CD4-positive, alpha-beta T cell (primary cell): ENCODE measurements at regions of chr14 and their contacts with region 1.

Region 1: DNA sequence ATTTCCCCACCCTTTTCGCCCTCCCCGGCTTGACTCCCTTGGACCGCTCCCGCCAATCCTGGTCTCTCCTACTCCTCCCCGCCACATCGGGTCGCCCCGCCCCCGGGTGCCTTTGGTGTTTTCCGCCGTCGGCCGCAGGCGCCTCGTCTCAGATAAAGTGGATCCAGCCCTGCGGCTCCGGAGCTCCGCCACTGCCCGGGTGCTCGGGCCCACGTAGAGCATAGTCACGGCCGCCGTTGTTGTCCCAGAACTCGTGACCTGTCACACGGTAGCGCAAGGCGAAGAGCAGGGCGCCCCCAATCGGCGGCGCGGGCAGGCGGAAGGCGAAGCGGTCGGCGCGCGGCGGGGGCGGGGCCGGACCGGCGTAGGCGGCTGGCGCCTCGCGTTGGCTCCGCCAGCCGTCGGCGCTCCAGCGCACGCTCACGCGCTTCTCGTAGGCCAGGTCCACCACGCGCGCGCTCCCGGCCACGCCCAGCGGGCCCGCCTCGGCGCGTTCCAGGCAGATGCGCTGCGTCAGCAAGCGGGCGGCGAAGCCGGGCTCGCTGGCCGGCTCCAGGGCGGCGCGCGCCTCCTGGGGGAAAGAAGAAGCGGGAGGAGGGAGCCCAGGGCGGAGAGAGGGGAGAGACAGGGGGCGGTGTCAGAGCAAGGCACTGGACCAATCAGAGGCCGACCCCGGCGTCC is 1.2 kb downstream of the PPP1R3E start:
- DNase-seq: peak; percentile 91 to 100 (median 96)
- ATAC-seq: peak; percentile 69
- H3K4me3 ChIP-seq: peak overlapping the region; percentile 75
- H3K4me3 Mint-ChIP-seq: peak overlapping the region; percentile 96
- H3K27ac ChIP-seq: peak overlapping the region; percentile 97
- H3K27ac Mint-ChIP-seq: peak overlapping the region; percentile 97
- H3K4me1 ChIP-seq: peaks cover 30% of the 10 kb centered on the region
- H3K4me1 Mint-ChIP-seq: peaks cover 39% of the 10 kb centered on the region
- H3K27me3 ChIP-seq: peaks cover 7 to 8% of the 10 kb centered on the region in 2 experiments
- H3K27me3 Mint-ChIP-seq: peaks cover 15% of the 10 kb centered on the region
- CTCF ChIP-seq: peak; percentile 65

Region 2: GRCh38 chr14:22864979-22865378 is 436.4 kb before region 1 on chr14:
- CTCF ChIA-PET with region 1: no interaction called
- POLR2A ChIA-PET with region 1: no interaction called
- intact Hi-C with region 1: no loop called
- DNase-seq: no peak
- ATAC-seq: no peak
- H3K4me3 ChIP-seq: no peak overlapping the region
- H3K4me3 Mint-ChIP-seq: no peak overlapping the region
- H3K27ac ChIP-seq: no peak overlapping the region
- H3K27ac Mint-ChIP-seq: no peak overlapping the region
- H3K4me1 ChIP-seq: peaks cover 26% of the 10 kb centered on the region
- H3K4me1 Mint-ChIP-seq: peaks cover 15% of the 10 kb centered on the region
- H3K27me3 ChIP-seq: no peaks in the 10 kb centered on the region
- H3K27me3 Mint-ChIP-seq: no peaks in the 10 kb centered on the region
- CTCF ChIP-seq: no peak

Region 3: DNA sequence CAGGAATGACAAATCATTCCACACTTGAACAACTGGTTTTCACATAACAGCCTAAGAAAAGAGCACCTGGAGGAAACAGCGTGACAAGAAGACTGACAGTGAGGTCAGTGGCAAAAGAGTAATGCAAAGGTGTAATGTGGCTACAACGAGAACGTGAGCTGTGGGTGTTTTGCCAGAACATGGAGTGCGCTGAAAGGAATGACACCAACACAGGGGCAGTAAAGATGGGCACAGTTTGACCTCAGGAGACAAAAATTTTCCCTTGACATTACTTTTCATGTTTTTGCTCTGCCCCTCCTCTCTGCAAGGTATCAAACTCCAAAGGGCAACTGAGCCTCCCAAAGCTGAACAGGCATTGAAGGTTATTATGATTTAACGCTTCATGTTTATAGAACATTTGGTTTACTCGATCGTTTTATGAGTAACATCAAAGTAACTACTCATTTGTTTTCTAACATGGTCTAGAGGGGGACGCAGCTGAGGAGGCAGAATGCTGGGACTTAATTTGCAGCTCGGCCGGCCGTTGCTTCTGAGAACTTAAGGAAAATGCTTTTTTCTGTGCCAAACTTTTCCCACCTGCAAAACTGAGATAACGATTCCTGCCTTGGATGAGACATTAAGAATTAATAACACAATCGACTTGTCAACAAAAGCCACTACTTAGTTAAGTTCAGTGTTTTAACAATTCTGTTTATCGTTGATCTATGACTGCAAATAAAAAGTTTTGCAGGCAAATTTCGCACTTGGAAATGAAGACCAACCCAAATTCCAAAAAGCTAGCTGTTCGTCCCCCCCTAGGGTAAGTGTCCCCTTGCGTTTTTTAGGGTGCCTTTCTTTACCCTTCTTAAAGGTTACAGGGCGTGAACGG is 345.5 kb before region 1 on chr14:
- CTCF ChIA-PET with region 1: no interaction called
- POLR2A ChIA-PET with region 1: no interaction called
- intact Hi-C with region 1: loop called in 1 of 2 experiments (anchors 5 kb)
- DNase-seq: no peak
- ATAC-seq: no peak
- H3K4me3 ChIP-seq: peak overlapping the region; percentile 89
- H3K4me3 Mint-ChIP-seq: peak overlapping the region; percentile 92
- H3K27ac ChIP-seq: peak overlapping the region; percentile 63 to 83
- H3K27ac Mint-ChIP-seq: peak overlapping the region; percentile 83
- H3K4me1 ChIP-seq: peaks cover 21% of the 10 kb centered on the region
- H3K4me1 Mint-ChIP-seq: peaks cover 18% of the 10 kb centered on the region
- H3K27me3 ChIP-seq: no peaks in the 10 kb centered on the region
- H3K27me3 Mint-ChIP-seq: no peaks in the 10 kb centered on the region
- CTCF ChIP-seq: no peak

Region 4: DNA sequence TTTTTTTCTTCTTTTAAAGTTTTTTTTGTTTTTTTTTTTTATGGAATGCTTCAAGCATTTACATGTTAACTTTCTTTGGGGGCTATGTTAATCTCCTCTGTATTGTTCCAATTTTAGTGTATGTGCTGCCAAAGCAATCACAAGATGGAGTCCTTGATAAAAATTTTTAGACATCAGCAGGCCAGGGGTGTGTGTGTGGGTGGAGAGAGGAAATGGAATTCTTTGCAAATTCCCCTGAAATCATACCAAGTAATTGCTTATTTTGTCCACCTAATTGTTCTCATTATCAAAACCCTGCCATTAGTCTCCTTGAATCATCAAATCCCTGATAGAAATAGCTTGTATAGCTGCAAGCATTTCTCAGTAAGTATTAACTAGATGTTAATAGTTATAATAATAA is 42.0 kb before region 1 on chr14:
- CTCF ChIA-PET with region 1: interaction called, 4 read pairs
- POLR2A ChIA-PET with region 1: no interaction called
- intact Hi-C with region 1: loop called in 1 of 2 experiments (anchors 2 kb)
- DNase-seq: no peak
- ATAC-seq: no peak
- H3K4me3 ChIP-seq: no peak overlapping the region
- H3K4me3 Mint-ChIP-seq: no peak overlapping the region
- H3K27ac ChIP-seq: no peak overlapping the region
- H3K27ac Mint-ChIP-seq: no peak overlapping the region
- H3K4me1 ChIP-seq: no peaks in the 10 kb centered on the region
- H3K4me1 Mint-ChIP-seq: no peaks in the 10 kb centered on the region
- H3K27me3 ChIP-seq: peaks cover 0 to 42% of the 10 kb centered on the region in 2 experiments
- H3K27me3 Mint-ChIP-seq: peaks cover 57% of the 10 kb centered on the region
- CTCF ChIP-seq: no peak

Region 5: GRCh38 chr14:23320774-23321571 is 19.5 kb after region 1 on chr14 and contains the start of gene PABPN1:
- CTCF ChIA-PET with region 1: interaction called, 66 read pairs
- POLR2A ChIA-PET with region 1: interaction called, 455 read pairs
- intact Hi-C with region 1: loop called (anchors 1 kb)
- DNase-seq: peak; percentile 93 to 100 (median 96)
- ATAC-seq: peak; percentile 85
- H3K4me3 ChIP-seq: peak within 1 kb of the TSS; percentile 87
- H3K4me3 Mint-ChIP-seq: peak within 1 kb of the TSS; percentile 94
- H3K27ac ChIP-seq: peak within 1 kb of the TSS; percentile 92 to 96
- H3K27ac Mint-ChIP-seq: peak within 1 kb of the TSS; percentile 92
- H3K4me1 ChIP-seq: peaks cover 29% of the 10 kb centered on the region
- H3K4me1 Mint-ChIP-seq: peaks cover 35% of the 10 kb centered on the region
- H3K27me3 ChIP-seq: no peaks in the 10 kb centered on the region
- H3K27me3 Mint-ChIP-seq: no peaks in the 10 kb centered on the region
- CTCF ChIP-seq: no peak
- total RNA-seq, gene PABPN1: 188 to 195 TPM

Region 6: GRCh38 chr14:23514644-23514957 is 213.2 kb after region 1 on chr14:
- CTCF ChIA-PET with region 1: no interaction called
- POLR2A ChIA-PET with region 1: no interaction called
- intact Hi-C with region 1: no loop called
- DNase-seq: no peak
- ATAC-seq: no peak
- H3K4me3 ChIP-seq: no peak overlapping the region
- H3K4me3 Mint-ChIP-seq: no peak overlapping the region
- H3K27ac ChIP-seq: no peak overlapping the region
- H3K27ac Mint-ChIP-seq: no peak overlapping the region
- H3K4me1 ChIP-seq: peaks cover 9% of the 10 kb centered on the region
- H3K4me1 Mint-ChIP-seq: peaks cover 21% of the 10 kb centered on the region
- H3K27me3 ChIP-seq: no peaks in the 10 kb centered on the region
- H3K27me3 Mint-ChIP-seq: no peaks in the 10 kb centered on the region
- CTCF ChIP-seq: no peak

Region 7: DNA sequence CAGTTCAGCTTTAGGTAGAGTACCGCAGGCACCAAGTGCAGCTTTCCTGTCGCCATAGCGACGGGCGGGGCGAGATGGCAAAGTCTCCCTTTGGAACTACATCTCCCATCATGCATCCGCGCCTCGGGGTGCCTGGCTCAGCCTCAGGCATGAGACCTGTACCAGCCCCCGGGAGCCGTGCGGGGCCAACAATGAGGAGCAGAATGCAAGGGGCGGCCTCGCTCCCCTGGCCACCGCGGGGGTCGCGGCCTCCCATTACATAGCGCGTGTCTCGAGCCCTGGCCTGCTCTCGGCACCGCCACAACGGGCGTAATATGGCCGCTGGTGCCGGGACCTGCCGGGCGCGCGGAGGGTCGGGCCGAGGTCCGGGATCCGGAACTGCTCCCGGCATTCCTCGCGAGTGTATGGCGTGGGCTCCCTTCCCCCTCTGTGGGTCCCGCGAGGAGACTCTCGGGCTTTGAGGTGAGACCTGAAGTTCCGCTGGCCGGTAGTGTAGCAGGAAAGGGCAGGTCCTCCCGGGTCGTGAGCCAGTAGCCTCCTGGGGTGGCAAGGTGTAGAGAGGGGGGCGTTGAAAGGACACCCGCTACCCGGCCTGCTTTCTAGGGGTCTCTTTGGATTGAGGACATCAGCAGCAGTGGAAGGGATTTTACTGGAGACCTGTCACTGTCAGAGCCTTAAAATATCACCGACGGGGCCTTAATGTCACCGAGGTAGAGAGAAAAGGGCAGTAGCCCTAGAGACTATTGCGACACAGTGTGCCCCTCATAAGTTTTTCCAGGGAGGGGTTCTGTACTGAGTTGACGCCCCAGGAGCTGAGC is 254.7 kb after region 1 on chr14 and contains the start of gene THTPA:
- CTCF ChIA-PET with region 1: no interaction called
- POLR2A ChIA-PET with region 1: interaction called, 3 read pairs
- intact Hi-C with region 1: loop called in 1 of 2 experiments (anchors 2 kb)
- DNase-seq: peak; percentile 86 to 96 (median 91)
- ATAC-seq: peak; percentile 91
- H3K4me3 ChIP-seq: peak within 1 kb of the TSS; percentile 94
- H3K4me3 Mint-ChIP-seq: peak within 1 kb of the TSS; percentile 99
- H3K27ac ChIP-seq: peak within 1 kb of the TSS; percentile 87 to 89
- H3K27ac Mint-ChIP-seq: peak within 1 kb of the TSS; percentile 79
- H3K4me1 ChIP-seq: peaks cover 40% of the 10 kb centered on the region
- H3K4me1 Mint-ChIP-seq: peaks cover 42% of the 10 kb centered on the region
- H3K27me3 ChIP-seq: peaks cover 0 to 1% of the 10 kb centered on the region in 2 experiments
- H3K27me3 Mint-ChIP-seq: peaks cover 9% of the 10 kb centered on the region
- CTCF ChIP-seq: no peak
- total RNA-seq, gene THTPA: 13.0 to 13.4 TPM